ENCODE measurements at regions of chrX and their contacts with region 1.

Region 1: DNA sequence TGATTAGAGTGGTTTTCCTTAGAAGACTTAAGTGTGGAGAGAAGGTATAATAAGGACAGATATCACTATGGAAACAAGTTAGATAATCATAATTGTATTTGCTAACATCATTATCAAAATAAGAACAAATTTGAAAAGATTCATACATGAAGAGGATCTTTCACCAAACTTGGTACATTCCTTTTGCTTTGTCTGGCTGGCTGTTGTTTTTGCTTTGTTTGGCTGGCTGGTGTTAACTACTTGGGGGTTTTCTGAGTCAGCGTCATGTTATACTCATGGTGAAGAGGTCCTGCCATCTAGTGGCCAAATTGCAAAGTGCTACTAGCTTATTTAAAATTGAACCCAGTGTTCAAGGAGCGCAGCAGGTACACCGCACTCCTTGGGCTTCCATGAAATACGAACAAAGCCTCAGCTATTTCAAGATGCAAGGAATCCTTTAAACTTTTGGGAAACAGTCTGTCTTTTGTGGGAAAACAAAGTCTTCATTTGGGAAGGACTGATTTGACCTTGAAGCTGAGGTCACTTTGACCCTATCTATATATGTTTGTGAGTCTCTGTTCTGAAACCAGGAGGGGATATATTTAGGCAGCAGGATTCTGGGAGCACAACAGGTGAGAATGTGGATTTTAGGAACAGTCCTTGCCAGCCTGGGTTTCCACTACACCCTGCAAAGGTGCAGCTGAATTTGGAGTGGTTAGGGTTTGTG is 129.7 kb downstream of the PLS3 start:
- DNase-seq: peak; percentile 22
- H3K4me3 Mint-ChIP-seq: no peak overlapping the region
- H3K27ac Mint-ChIP-seq: no peak overlapping the region
- H3K4me1 Mint-ChIP-seq: no peaks in the 10 kb centered on the region
- H3K27me3 Mint-ChIP-seq: no peaks in the 10 kb centered on the region

Region 2: DNA sequence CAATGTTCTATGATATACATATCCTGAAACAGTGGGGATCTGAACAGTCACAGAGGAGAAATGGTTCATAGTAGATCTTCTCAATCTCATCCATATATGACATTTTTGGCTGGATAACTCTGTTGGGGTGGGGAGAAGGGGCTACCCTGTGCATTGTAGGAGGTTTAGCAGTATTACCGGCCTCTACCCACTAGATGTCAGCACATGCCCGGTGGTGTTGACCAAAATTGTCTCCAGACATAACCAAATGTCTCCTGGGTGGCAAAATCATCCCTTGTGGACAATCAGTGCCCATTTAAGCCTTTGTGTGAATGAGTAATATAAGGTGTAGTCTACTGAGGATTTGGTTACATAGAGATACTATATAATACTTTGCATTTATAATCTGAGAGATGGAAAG is 39.7 kb before region 1 on chrX:
- CTCF ChIA-PET with region 1: interaction called, 10 read pairs
- POLR2A ChIA-PET with region 1: no interaction called
- intact Hi-C with region 1: loop called (anchors 2 kb)
- DNase-seq: peak; percentile 26
- H3K4me3 Mint-ChIP-seq: no peak overlapping the region
- H3K27ac Mint-ChIP-seq: no peak overlapping the region
- H3K4me1 Mint-ChIP-seq: no peaks in the 10 kb centered on the region
- H3K27me3 Mint-ChIP-seq: no peaks in the 10 kb centered on the region

Region 3: GRCh38 chrX:116607776-116608175 is 917.1 kb after region 1 on chrX:
- CTCF ChIA-PET with region 1: no interaction called
- POLR2A ChIA-PET with region 1: no interaction called
- intact Hi-C with region 1: no loop called
- DNase-seq: no peak
- H3K4me3 Mint-ChIP-seq: no peak overlapping the region
- H3K27ac Mint-ChIP-seq: no peak overlapping the region
- H3K4me1 Mint-ChIP-seq: no peaks in the 10 kb centered on the region
- H3K27me3 Mint-ChIP-seq: no peaks in the 10 kb centered on the region

Measured in activated CD4-positive, alpha-beta memory T cell treated with anti-CD3 and anti-CD28 coated beads for 36 hours (primary cell).